Activated naive CD4-positive, alpha-beta T cell treated with anti-CD3 and anti-CD28 coated beads for 36 hours (primary cell): ENCODE measurements at regions of chr12 and their contacts with region 1.

Region 1: GRCh38 chr12:3885277-3886094 is 12.3 kb upstream of the PARP11 start:
- DNase-seq: peak; percentile 58
- H3K4me3 Mint-ChIP-seq: no peak overlapping the region
- H3K27ac Mint-ChIP-seq: peak overlapping the region; percentile 19
- H3K4me1 Mint-ChIP-seq: peaks cover 7% of the 10 kb centered on the region
- H3K27me3 Mint-ChIP-seq: no peaks in the 10 kb centered on the region

Region 2: GRCh38 chr12:3236345-3237187 is 648.9 kb before region 1 on chr12:
- CTCF ChIA-PET with region 1: no interaction called
- intact Hi-C with region 1: no loop called
- DNase-seq: peak; percentile 35
- H3K4me3 Mint-ChIP-seq: no peak overlapping the region
- H3K27ac Mint-ChIP-seq: no peak overlapping the region
- H3K4me1 Mint-ChIP-seq: no peaks in the 10 kb centered on the region
- H3K27me3 Mint-ChIP-seq: no peaks in the 10 kb centered on the region

Region 3: GRCh38 chr12:3896801-3897331 is 11.4 kb after region 1 on chr12:
- CTCF ChIA-PET with region 1: interaction called, 42 read pairs
- intact Hi-C with region 1: no loop called
- DNase-seq: peak; percentile 16
- H3K4me3 Mint-ChIP-seq: peak overlapping the region; percentile 7
- H3K27ac Mint-ChIP-seq: peak overlapping the region; percentile 77
- H3K4me1 Mint-ChIP-seq: peaks cover 41% of the 10 kb centered on the region
- H3K27me3 Mint-ChIP-seq: no peaks in the 10 kb centered on the region

Region 4: GRCh38 chr12:3980504-3981272 is 95.2 kb after region 1 on chr12:
- CTCF ChIA-PET with region 1: interaction called, 10 read pairs
- intact Hi-C with region 1: no loop called
- DNase-seq: peak; percentile 41
- H3K4me3 Mint-ChIP-seq: no peak overlapping the region
- H3K27ac Mint-ChIP-seq: peak overlapping the region; percentile 6
- H3K4me1 Mint-ChIP-seq: peaks cover 43% of the 10 kb centered on the region
- H3K27me3 Mint-ChIP-seq: no peaks in the 10 kb centered on the region

Region 5: GRCh38 chr12:3998968-3999826 is 113.7 kb after region 1 on chr12:
- CTCF ChIA-PET with region 1: interaction called, 11 read pairs
- intact Hi-C with region 1: no loop called
- DNase-seq: no peak
- H3K4me3 Mint-ChIP-seq: no peak overlapping the region
- H3K27ac Mint-ChIP-seq: no peak overlapping the region
- H3K4me1 Mint-ChIP-seq: peaks cover 5% of the 10 kb centered on the region
- H3K27me3 Mint-ChIP-seq: no peaks in the 10 kb centered on the region

Region 6: GRCh38 chr12:4526923-4527546 is 641.5 kb after region 1 on chr12:
- CTCF ChIA-PET with region 1: no interaction called
- intact Hi-C with region 1: loop called (anchors 2 kb)
- DNase-seq: no peak
- H3K4me3 Mint-ChIP-seq: no peak overlapping the region
- H3K27ac Mint-ChIP-seq: no peak overlapping the region
- H3K4me1 Mint-ChIP-seq: peaks cover 2% of the 10 kb centered on the region
- H3K27me3 Mint-ChIP-seq: no peaks in the 10 kb centered on the region